ENCODE measurements at regions of chr10 and their contacts with region 1.

Region 1: GRCh38 chr10:13776861-13777311 is 190.1 kb downstream of the PRPF18 start:
- DNase-seq: no peak
- H3K4me3 ChIP-seq: no peak overlapping the region
- H3K27ac ChIP-seq: no peak overlapping the region
- H3K4me1 ChIP-seq: peaks cover 0 to 7% (median 0%) of the 10 kb centered on the region in 4 donors
- H3K27me3 ChIP-seq: no peaks in the 10 kb centered on the region
- CTCF ChIP-seq: no peak
- EP300 ChIP-seq: no peak
- POLR2A ChIP-seq: no peak

Region 2: GRCh38 chr10:13115832-13116803 is 660.8 kb before region 1 on chr10:
- intact Hi-C with region 1: no loop called
- DNase-seq: peak in 1 of 2 donors; percentile 59
- H3K4me3 ChIP-seq: no peak overlapping the region
- H3K27ac ChIP-seq: peak overlapping the region; percentile 64 to 88 (median 80)
- H3K4me1 ChIP-seq: peaks cover 0 to 19% (median 7%) of the 10 kb centered on the region in 4 donors
- H3K27me3 ChIP-seq: no peaks in the 10 kb centered on the region
- CTCF ChIP-seq: no peak
- EP300 ChIP-seq: no peak
- POLR2A ChIP-seq: no peak

Region 3: GRCh38 chr10:13659897-13660550 is 116.9 kb before region 1 on chr10:
- intact Hi-C with region 1: loop called (anchors 5 kb)
- DNase-seq: peak; percentile 64 to 82
- H3K4me3 ChIP-seq: no peak overlapping the region
- H3K27ac ChIP-seq: peak overlapping the region in 3 of 5 donors; percentile 25 to 53 (median 29)
- H3K4me1 ChIP-seq: peaks cover 5 to 26% (median 12%) of the 10 kb centered on the region in 4 donors
- H3K27me3 ChIP-seq: no peaks in the 10 kb centered on the region
- CTCF ChIP-seq: peak in 5 of 7 experiments; percentile 68 to 88 (median 84)
- EP300 ChIP-seq: no peak
- POLR2A ChIP-seq: no peak

Region 4: DNA sequence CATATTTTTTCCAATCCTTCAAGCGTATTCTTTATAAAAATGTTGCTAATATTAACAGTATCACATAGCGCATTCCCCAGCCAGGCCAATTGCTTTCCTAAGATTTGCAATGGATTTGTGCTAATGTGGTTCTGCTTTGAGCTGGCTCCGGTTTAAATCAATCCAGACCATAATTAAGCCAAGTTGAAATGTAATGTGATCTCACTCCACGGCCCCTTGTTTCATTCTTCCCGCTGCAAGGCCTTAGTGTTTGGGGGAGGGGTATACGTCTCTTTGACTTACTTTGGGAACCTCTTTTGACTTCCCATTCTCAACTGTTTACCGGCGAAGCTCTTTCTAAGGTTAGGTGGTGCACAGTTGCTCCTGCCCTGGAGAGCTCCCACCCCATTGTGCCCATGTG is 103.7 kb before region 1 on chr10:
- intact Hi-C with region 1: no loop called
- DNase-seq: peak in 1 of 2 donors; percentile 57
- H3K4me3 ChIP-seq: no peak overlapping the region
- H3K27ac ChIP-seq: no peak overlapping the region
- H3K4me1 ChIP-seq: peaks cover 0 to 14% (median 7%) of the 10 kb centered on the region in 4 donors
- H3K27me3 ChIP-seq: no peaks in the 10 kb centered on the region
- CTCF ChIP-seq: no peak
- EP300 ChIP-seq: no peak
- POLR2A ChIP-seq: no peak

Region 5: GRCh38 chr10:13853854-13854253 is 77.0 kb after region 1 on chr10:
- intact Hi-C with region 1: no loop called
- DNase-seq: no peak
- H3K4me3 ChIP-seq: no peak overlapping the region
- H3K27ac ChIP-seq: peak overlapping the region in 4 of 5 donors; percentile 9 to 47 (median 26)
- H3K4me1 ChIP-seq: peaks cover 0 to 6% (median 0%) of the 10 kb centered on the region in 4 donors
- H3K27me3 ChIP-seq: no peaks in the 10 kb centered on the region
- CTCF ChIP-seq: no peak
- EP300 ChIP-seq: no peak
- POLR2A ChIP-seq: no peak

Measured in stomach (tissue), 19 donors.